Lower leg skin (tissue), 4 donors: ENCODE measurements at regions of chr4 and their contacts with region 1.

Region 1: GRCh38 chr4:163063891-163064290 is 102.8 kb downstream of the NAF1 start:
- DNase-seq: no peak
- H3K4me3 ChIP-seq: no peak overlapping the region
- CTCF ChIP-seq: no peak
- POLR2A ChIP-seq: no peak

Region 2: DNA sequence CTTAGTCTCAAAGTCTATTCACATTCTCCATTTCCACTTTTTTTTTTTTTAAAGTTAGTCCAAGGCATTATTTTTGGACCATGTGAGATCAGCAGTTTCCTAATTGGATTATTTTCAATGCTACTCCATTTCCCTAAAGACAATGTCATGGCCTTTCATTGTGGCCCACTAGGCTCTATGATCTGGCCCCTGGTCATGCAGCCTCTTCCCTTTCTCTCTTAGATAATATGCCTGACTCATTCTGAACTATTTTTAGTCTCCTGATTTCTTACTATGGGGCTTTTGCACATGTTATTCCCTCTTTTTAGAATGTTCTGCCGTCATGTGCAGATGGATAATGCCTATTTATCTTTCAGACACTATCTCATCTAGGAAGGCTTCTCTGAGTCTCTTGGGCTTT is 587.9 kb after region 1 on chr4:
- intact Hi-C with region 1: loop called (anchors 5 kb)
- DNase-seq: no peak
- H3K4me3 ChIP-seq: no peak overlapping the region
- CTCF ChIP-seq: no peak
- POLR2A ChIP-seq: no peak